Activated CD4-positive, alpha-beta T cell treated with anti-CD3 and anti-CD28 coated beads for 36 hours (primary cell): ENCODE measurements at regions of chr16 and their contacts with region 1.

Region 1: GRCh38 chr16:15714393-15715172 is 64.5 kb downstream of the NDE1 start:
- DNase-seq: no peak
- ATAC-seq: no peak
- H3K4me3 Mint-ChIP-seq: no peak overlapping the region
- H3K27ac Mint-ChIP-seq: no peak overlapping the region
- H3K4me1 Mint-ChIP-seq: peaks cover 3% of the 10 kb centered on the region
- H3K27me3 Mint-ChIP-seq: no peaks in the 10 kb centered on the region

Region 2: DNA sequence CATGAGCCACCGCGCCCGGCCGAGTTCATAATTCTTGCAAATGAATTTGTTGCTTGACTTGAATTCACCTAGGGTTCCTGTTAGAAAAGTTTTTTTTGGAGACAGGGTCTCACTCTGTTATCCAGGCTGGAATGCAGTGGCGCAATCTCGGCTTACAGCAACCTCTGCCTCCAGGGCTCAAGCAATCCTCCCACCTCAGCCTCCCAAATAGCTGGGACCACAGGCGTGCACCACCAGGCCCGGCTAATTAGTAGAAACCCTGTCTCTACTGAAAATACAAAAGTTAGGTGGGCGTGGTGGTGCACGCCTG is 42.4 kb after region 1 on chr16:
- CTCF ChIA-PET with region 1: no interaction called
- POLR2A ChIA-PET with region 1: interaction called, 12 read pairs
- intact Hi-C with region 1: no loop called
- DNase-seq: no peak
- ATAC-seq: no peak
- H3K4me3 Mint-ChIP-seq: no peak overlapping the region
- H3K27ac Mint-ChIP-seq: no peak overlapping the region
- H3K4me1 Mint-ChIP-seq: no peaks in the 10 kb centered on the region
- H3K27me3 Mint-ChIP-seq: peaks cover 7% of the 10 kb centered on the region

Region 3: DNA sequence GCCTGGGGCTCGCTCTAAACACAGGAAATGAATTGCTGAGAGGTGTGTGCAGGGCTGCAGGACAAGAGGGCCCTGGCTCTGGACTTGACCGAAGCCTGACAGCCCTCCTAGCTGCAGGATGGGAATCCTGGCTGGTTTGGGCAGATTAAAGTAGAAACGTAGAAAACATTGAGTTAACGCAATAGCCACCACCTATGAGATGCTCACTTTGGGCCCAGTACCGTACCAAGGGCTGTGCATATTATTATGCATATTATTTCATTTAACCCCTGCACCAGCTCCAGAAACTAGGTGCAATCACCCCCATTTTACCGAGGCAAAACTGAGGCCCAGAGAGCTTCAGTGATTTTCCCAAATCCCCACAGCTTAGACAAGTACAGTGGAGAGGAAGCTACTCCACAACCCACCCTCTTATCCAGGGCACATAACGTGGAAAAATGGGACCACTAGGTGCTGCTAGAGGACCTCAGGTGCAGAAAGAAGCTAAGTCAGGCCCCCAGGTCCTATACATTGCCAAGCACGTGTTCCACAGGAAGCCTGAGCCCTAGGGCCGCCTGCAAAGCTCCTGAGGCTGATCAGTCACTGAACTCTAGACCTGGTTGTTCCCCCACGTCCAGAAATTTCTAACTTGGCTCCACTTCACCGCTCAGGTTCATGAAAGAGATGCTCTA is 63.1 kb after region 1 on chr16:
- CTCF ChIA-PET with region 1: no interaction called
- POLR2A ChIA-PET with region 1: no interaction called
- intact Hi-C with region 1: no loop called
- DNase-seq: peak; percentile 44
- ATAC-seq: peak; percentile 58
- H3K4me3 Mint-ChIP-seq: no peak overlapping the region
- H3K27ac Mint-ChIP-seq: no peak overlapping the region
- H3K4me1 Mint-ChIP-seq: no peaks in the 10 kb centered on the region
- H3K27me3 Mint-ChIP-seq: no peaks in the 10 kb centered on the region